Gastrocnemius medialis (tissue), 4 donors: ENCODE measurements at regions of chr1 and their contacts with region 1.

Region 1: DNA sequence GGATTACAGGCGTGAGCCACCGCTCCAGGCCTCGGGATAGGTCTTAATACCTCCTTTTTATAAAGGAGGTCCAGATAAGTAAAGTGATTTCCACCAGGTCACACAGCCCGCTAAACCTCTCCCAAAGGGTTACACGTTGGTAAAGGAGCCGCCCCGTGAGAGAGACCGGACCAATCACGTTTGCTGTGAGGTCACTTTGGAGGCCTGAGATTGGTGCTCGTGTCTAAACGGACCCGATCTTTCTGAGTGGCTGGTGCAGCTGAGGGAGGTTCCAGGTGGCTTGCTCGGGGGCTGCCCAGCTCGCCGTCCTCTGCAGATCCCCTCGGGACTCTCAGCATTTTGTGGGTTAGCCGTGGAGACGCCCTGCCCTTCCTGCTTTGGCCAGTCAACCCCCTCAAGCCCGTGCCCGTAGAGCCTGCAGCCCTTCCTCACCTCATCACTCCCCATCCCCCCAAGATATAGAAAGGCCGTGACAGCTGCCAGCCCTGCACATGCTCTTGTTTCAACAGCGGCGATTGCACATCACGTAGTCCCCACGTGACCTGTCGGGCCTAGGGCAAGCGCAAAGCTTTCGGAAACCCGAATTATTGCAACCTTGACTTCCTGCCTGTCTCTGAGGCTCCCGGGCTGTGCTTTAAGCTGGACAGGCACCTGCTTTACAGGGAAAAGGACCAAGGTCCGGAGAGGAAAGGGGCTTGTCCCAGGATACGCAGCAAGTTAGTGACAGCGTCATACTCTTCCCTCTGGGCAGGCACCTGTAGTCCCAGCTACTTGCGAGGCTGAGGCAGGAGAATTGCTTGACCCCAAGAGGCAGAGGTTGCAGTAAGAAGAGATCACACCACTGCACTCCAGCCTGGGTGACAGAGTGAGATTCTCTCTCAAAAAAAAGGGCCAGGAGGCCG is 5.0 kb upstream of the COA7 start:
- DNase-seq: peak; percentile 93 to 96
- ATAC-seq: peak; percentile 74 to 77
- H3K4me3 ChIP-seq: peak overlapping the region; percentile 58 to 73 (median 62)
- H3K27ac ChIP-seq: peak overlapping the region; percentile 93 to 96 (median 95)
- H3K4me1 ChIP-seq: peaks cover 38 to 44% of the 10 kb centered on the region in 2 donors
- H3K27me3 ChIP-seq: no peaks in the 10 kb centered on the region
- CTCF ChIP-seq: peak in 1 of 5 experiments; percentile 42
- POLR2A ChIP-seq: peak; percentile 68 to 84

Region 2: GRCh38 chr1:52726265-52727113 is 23.4 kb after region 1 on chr1 and contains the start of gene ZYG11B:
- in situ Hi-C with region 1: no loop called
- intact Hi-C with region 1: loop called (anchors 1 kb)
- DNase-seq: peak; percentile 83 to 88
- ATAC-seq: peak; percentile 87 to 89
- H3K4me3 ChIP-seq: peak within 1 kb of the TSS; percentile 75 to 90 (median 78)
- H3K27ac ChIP-seq: peak within 1 kb of the TSS; percentile 90 to 96 (median 94)
- H3K4me1 ChIP-seq: peaks cover 26 to 32% of the 10 kb centered on the region in 2 donors
- H3K27me3 ChIP-seq: no peaks in the 10 kb centered on the region
- CTCF ChIP-seq: no peak
- POLR2A ChIP-seq: peak; percentile 89 to 91
- total RNA-seq, gene ZYG11B: 136 to 248 (median 194) TPM

Region 3: GRCh38 chr1:52739699-52740467 is 36.7 kb after region 1 on chr1:
- in situ Hi-C with region 1: no loop called
- intact Hi-C with region 1: loop called (anchors 2 kb)
- DNase-seq: peak; percentile 35 to 51
- ATAC-seq: peak; percentile 75 to 79
- H3K4me3 ChIP-seq: no peak overlapping the region
- H3K27ac ChIP-seq: peak overlapping the region; percentile 82 to 91 (median 89)
- H3K4me1 ChIP-seq: peaks cover 50 to 54% of the 10 kb centered on the region in 2 donors
- H3K27me3 ChIP-seq: no peaks in the 10 kb centered on the region
- CTCF ChIP-seq: no peak
- POLR2A ChIP-seq: no peak

Region 4: GRCh38 chr1:52748119-52748518 is 45.0 kb after region 1 on chr1:
- in situ Hi-C with region 1: no loop called
- intact Hi-C with region 1: loop called (anchors 1 kb)
- DNase-seq: no peak
- ATAC-seq: peak in 1 of 2 donors; percentile 40
- H3K4me3 ChIP-seq: no peak overlapping the region
- H3K27ac ChIP-seq: peak overlapping the region in 3 of 4 donors; percentile 33 to 59 (median 53)
- H3K4me1 ChIP-seq: peaks cover 50 to 76% of the 10 kb centered on the region in 2 donors
- H3K27me3 ChIP-seq: no peaks in the 10 kb centered on the region
- CTCF ChIP-seq: peak; percentile 30 to 40 (median 33)
- POLR2A ChIP-seq: no peak

Region 5: GRCh38 chr1:52927212-52928014 is 224.3 kb after region 1 on chr1 and contains the start of gene SCP2:
- in situ Hi-C with region 1: loop called in 2 of 4 experiments (anchors 10 kb)
- intact Hi-C with region 1: loop called (anchors 5 kb)
- DNase-seq: peak; percentile 80 to 83
- ATAC-seq: peak; percentile 81 to 90
- H3K4me3 ChIP-seq: peak within 1 kb of the TSS; percentile 81 to 90 (median 88)
- H3K27ac ChIP-seq: peak within 1 kb of the TSS; percentile 91 to 94 (median 92)
- H3K4me1 ChIP-seq: peaks cover 9 to 23% of the 10 kb centered on the region in 2 donors
- H3K27me3 ChIP-seq: no peaks in the 10 kb centered on the region
- CTCF ChIP-seq: no peak
- POLR2A ChIP-seq: peak; percentile 83 to 84
- total RNA-seq, gene SCP2: 44.6 to 75.4 (median 61.1) TPM

Region 6: DNA sequence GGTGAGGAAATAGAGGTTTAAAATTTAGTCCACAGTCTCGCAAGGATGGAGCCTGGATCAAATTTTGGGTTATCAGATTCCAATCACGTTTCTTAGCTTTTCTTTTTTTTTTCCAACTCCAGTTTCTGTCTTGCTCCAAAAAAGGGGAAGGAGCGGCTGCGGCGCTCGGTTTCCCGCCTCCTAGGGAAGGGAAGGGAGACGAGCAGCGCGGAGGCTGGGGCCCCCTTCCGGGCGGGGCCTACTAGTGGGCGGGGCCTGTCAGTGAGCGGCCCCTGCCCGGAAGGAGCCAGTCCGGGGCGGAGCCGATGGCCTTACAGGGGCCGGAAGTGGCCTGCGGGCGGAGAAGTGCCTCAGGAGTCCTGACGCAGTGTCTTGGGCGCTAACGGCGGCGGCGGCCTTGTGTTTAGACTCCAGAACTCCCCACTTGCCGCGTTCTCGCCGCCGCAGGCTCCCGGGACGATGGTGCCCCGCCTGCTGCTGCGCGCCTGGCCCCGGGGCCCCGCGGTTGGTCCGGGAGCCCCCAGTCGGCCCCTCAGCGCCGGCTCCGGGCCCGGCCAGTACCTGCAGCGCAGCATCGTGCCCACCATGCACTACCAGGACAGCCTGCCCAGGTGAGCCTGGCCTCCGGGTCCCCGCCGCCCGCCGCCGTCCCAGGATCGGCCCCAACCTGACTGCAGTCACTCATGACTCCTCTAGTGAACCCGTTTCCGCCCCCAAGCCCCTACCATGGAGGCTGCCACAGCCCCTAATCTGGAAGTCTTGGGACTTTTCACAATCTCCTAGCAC is 493.5 kb after region 1 on chr1 and contains the start of gene CPT2:
- in situ Hi-C with region 1: loop called in 1 of 4 experiments (anchors 25 kb)
- intact Hi-C with region 1: no loop called
- DNase-seq: peak; percentile 83 to 90
- ATAC-seq: peak; percentile 90 to 94
- H3K4me3 ChIP-seq: peak within 1 kb of the TSS; percentile 83 to 94 (median 88)
- H3K27ac ChIP-seq: peak within 1 kb of the TSS; percentile 88 to 98 (median 96)
- H3K4me1 ChIP-seq: peaks cover 27 to 30% of the 10 kb centered on the region in 2 donors
- H3K27me3 ChIP-seq: no peaks in the 10 kb centered on the region
- CTCF ChIP-seq: peak in 2 of 5 experiments; percentile 21 to 35
- POLR2A ChIP-seq: peak; percentile 91 to 98
- total RNA-seq, gene CPT2: 13.3 to 30.6 (median 26.6) TPM

Region 7: DNA sequence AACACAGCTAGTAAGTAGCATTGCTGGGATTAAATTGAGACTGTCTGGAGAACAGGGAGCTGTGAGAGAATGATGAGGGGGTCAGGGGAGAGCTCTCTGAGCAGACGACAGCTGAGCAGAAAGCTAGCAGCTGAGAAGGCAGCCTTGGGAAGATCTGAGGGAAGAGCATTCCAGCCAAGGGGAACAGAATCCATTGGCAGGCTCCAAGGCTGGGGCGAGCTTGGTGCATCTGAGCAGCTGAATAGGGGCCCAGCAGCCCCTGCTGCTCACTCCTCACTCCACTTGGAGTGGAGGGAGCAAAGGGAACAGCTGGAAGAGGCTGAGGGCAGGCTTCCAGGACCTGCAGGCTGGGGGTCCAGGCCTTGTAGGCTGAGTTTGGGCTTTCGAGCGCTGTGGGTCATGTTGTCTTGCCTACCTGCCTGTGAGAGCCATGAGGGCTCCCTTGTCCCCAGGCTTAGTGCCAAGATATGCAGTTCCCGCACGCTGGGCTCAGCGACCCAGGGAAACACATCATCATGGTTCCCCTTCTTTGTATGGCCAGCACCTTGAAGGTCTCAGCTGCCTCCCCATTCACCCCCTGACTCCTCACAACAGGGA is 1855.4 kb after region 1 on chr1:
- in situ Hi-C with region 1: no loop called
- intact Hi-C with region 1: loop called (anchors 10 kb)
- DNase-seq: no peak
- ATAC-seq: no peak
- H3K4me3 ChIP-seq: no peak overlapping the region
- H3K27ac ChIP-seq: peak overlapping the region; percentile 66 to 82 (median 80)
- H3K4me1 ChIP-seq: peaks cover 26 to 27% of the 10 kb centered on the region in 2 donors
- H3K27me3 ChIP-seq: no peaks in the 10 kb centered on the region
- CTCF ChIP-seq: no peak
- POLR2A ChIP-seq: no peak